ENCODE measurements at regions of chr14 and their contacts with region 1.

Region 1: GRCh38 chr14:41925409-41925808 is 318.7 kb downstream of the LRFN5 start:
- DNase-seq: peak in 1 of 2 experiments; percentile 4
- H3K4me3 ChIP-seq: no peak overlapping the region
- H3K27ac ChIP-seq: no peak overlapping the region
- H3K4me1 ChIP-seq: no peaks in the 10 kb centered on the region
- H3K27me3 ChIP-seq: no peaks in the 10 kb centered on the region
- CTCF ChIP-seq: no peak; the same call in 1 of the 2 replicates

Region 2: GRCh38 chr14:42214981-42215491 is 289.6 kb after region 1 on chr14:
- CTCF ChIA-PET with region 1: no interaction called
- POLR2A ChIA-PET with region 1: no interaction called
- intact Hi-C with region 1: loop called (anchors 10 kb)
- DNase-seq: peak; percentile 10 to 54
- H3K4me3 ChIP-seq: no peak overlapping the region
- H3K27ac ChIP-seq: peak overlapping the region; percentile 17; the same call in 1 of the 2 replicates
- H3K4me1 ChIP-seq: peaks cover 15% of the 10 kb centered on the region
- H3K27me3 ChIP-seq: no peaks in the 10 kb centered on the region
- CTCF ChIP-seq: no peak

Region 3: DNA sequence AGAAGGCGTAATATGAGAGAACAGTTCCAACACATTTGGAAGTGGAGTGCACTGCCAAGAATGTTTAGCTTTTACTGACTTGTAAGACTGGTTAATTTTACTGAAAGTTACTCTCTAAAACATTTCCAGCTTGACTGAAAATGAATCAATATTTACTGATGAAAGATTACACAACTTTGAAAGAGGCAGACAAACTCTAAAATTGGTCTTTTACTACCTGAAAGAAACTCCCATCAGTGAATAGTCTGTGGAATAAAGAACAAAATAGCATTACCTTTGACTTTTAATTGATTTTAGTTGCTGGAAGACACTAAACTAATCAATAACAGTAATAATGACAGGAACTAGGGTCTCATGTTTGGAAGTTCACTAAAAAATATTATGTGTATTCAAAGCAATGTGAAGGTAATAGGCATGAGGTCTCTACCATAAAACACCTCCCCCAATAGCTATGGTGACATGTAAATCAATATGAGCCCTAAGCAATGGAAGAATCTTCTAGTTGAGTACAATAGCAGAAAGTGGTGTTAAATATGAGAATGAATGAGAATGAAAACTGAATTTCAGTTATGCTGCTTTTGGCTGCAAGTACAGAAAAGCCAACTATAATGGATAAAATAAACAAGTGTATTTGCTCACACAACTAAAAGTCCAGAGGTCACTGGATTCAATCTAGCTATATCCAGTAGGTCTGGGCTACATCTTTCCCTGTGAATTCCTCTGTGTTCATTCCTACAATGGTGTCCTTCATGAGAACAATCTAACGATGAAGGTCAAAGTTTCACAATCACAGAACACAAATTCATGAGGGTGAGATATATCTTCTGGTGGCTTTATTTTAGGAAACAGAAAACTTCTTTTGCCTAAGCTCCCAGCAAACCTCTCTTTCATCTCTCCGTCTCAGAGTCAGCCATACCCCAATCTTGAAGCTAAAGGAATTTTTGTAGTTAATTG is 1853.6 kb after region 1 on chr14:
- CTCF ChIA-PET with region 1: no interaction called
- POLR2A ChIA-PET with region 1: no interaction called
- intact Hi-C with region 1: no loop called
- DNase-seq: no peak
- H3K4me3 ChIP-seq: no peak overlapping the region
- H3K27ac ChIP-seq: no peak overlapping the region
- H3K4me1 ChIP-seq: no peaks in the 10 kb centered on the region
- H3K27me3 ChIP-seq: no peaks in the 10 kb centered on the region
- CTCF ChIP-seq: no peak

Measured in PC-9 (cell line).